Panc1 (cell line): ENCODE measurements at regions of chr4 and their contacts with region 1.

Region 1: DNA sequence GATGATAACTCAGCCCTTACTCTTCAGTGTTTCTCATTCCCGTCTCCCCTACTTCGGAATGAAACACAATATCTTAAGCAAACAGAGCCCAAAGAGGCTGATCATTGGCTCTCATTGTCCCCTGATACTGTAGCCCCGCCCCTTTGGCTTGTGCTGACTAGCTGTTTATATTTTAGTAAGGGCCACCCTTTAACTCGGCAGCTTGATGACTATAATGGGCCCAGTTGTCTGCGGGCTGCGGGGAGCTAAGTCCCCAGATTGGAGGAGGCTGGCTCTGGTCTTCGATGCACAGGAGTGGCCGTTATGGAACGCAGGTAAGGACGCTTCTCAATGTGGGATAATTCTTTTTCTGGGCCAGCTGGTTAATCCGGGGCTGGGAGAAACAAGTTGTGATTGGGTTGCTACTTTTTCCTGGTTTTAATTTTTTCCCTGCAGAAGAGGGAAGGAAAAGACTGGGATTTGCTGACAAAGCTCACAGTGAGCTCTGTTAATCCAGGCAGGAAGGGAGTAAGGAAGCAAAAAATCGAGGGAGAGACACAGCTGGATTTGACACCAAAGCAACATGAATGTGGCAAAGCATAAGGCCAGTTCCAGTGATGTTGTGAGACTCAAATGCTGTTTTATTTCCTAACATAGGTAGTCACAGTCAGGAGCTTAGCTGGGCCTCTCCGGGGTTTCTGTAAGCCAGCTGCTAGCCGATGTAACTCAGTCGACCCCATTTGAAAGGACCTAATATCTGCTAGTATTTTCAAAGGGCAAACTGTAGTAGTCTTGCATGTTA is at the start of gene TRIM2:
- DNase-seq: no peak
- ATAC-seq: peak; percentile 71
- H3K4me3 ChIP-seq: peak within 1 kb of the TSS; percentile 25 to 40
- H3K27ac ChIP-seq: peak within 1 kb of the TSS; percentile 68
- H3K4me1 ChIP-seq: peaks cover 29% of the 10 kb centered on the region
- H3K27me3 ChIP-seq: no peaks in the 10 kb centered on the region
- CTCF ChIP-seq: no peak
- total RNA-seq, gene TRIM2: 18.9 TPM

Region 2: DNA sequence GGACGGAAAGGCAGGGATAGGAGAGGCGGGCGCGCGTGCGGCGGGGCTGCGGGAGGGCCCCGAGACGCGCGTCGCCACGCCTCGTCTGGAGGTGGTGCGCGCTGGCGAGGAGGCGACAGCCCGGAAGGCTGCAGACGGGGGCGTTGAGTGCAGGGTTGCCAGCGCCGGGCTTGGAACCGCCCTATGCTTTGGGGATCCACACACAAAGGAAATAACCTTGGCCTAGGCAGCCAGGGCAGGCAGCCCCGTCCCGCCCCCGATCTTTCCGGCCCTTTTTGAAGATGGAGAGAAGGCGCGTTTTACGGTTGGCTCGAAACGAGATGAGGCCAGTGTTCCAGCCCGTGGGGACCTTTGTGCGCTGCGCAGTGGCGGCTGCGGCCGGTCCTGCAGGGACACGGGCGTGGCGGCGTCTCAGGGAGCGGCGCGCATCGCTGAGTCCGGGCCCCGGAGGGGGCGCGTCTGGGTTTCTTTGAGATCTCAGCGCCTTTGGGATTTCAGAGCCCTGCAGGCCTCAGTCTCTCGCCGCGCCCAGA is 51.0 kb before region 1 on chr4:
- CTCF ChIA-PET with region 1: no interaction called
- POLR2A ChIA-PET with region 1: no interaction called
- in situ Hi-C with region 1: no loop called
- intact Hi-C with region 1: loop called (anchors 5 kb)
- DNase-seq: no peak
- ATAC-seq: peak; percentile 94
- H3K4me3 ChIP-seq: peak overlapping the region; percentile 52 to 59
- H3K27ac ChIP-seq: peak overlapping the region; percentile 63
- H3K4me1 ChIP-seq: peaks cover 7% of the 10 kb centered on the region
- H3K27me3 ChIP-seq: no peaks in the 10 kb centered on the region
- CTCF ChIP-seq: no peak

Region 3: DNA sequence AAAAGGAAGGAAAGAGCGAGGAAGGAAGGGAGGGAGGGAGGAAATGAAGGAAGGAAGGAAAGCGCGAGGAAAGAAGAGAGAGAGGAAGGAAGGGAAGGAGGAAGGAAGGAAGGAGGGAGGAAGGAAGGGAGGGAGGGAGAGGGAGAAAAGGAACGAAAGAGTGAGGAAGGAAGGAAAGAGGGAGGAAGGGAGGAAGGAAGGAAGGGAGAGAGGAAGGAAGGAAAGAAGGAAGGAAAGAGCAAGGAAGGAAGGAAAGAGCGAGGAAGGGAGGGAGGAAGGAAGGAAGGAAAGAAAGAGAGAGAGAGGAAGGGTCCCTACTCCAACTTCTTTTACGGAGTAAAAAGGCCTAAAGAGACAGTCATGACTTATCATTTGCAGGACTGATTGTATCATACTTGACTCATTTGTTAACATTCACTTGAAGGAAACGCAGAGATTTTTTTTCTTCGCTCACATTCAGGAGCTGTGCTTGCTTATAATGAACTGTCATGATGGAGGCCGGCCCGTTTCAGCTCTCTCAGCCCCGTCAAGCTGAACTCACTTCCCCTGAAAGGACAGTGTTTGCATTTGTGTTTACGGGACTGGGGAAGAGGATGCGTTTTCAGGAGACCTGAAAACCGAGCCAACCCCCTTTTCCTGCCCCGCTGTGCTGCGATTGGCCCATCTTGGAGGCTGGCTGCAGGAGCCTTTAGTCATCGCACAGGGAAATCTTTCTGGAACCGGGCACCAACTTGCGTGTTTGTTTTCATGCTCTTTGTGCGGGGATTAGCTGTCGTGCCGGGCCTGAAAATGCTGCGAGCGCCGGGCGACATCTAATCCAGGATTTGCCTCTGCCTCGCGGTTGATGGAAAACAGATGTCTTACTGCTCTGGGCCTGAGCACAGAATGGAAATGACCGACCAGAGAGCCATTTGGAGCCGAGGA is 17.6 kb after region 1 on chr4:
- CTCF ChIA-PET with region 1: interaction called, 27 read pairs
- POLR2A ChIA-PET with region 1: no interaction called
- in situ Hi-C with region 1: no loop called
- intact Hi-C with region 1: no loop called
- DNase-seq: no peak
- ATAC-seq: peak; percentile 89
- H3K4me3 ChIP-seq: peak overlapping the region; percentile 57 to 66
- H3K27ac ChIP-seq: peak overlapping the region; percentile 74
- H3K4me1 ChIP-seq: no peaks in the 10 kb centered on the region; the same call in 1 of the 2 replicates
- H3K27me3 ChIP-seq: no peaks in the 10 kb centered on the region
- CTCF ChIP-seq: no peak

Region 4: GRCh38 chr4:153318696-153319320 is 114.4 kb after region 1 on chr4:
- CTCF ChIA-PET with region 1: no interaction called
- POLR2A ChIA-PET with region 1: no interaction called
- in situ Hi-C with region 1: no loop called
- intact Hi-C with region 1: loop called (anchors 2 kb)
- DNase-seq: no peak
- ATAC-seq: peak; percentile 91
- H3K4me3 ChIP-seq: no peak overlapping the region
- H3K27ac ChIP-seq: no peak overlapping the region
- H3K4me1 ChIP-seq: no peaks in the 10 kb centered on the region
- H3K27me3 ChIP-seq: no peaks in the 10 kb centered on the region
- CTCF ChIP-seq: peak; percentile 70; the same call in 1 of the 2 replicates